Endothelial cell of umbilical vein (primary cell): ENCODE measurements at regions of chr5 and their contacts with region 1.

Region 1: DNA sequence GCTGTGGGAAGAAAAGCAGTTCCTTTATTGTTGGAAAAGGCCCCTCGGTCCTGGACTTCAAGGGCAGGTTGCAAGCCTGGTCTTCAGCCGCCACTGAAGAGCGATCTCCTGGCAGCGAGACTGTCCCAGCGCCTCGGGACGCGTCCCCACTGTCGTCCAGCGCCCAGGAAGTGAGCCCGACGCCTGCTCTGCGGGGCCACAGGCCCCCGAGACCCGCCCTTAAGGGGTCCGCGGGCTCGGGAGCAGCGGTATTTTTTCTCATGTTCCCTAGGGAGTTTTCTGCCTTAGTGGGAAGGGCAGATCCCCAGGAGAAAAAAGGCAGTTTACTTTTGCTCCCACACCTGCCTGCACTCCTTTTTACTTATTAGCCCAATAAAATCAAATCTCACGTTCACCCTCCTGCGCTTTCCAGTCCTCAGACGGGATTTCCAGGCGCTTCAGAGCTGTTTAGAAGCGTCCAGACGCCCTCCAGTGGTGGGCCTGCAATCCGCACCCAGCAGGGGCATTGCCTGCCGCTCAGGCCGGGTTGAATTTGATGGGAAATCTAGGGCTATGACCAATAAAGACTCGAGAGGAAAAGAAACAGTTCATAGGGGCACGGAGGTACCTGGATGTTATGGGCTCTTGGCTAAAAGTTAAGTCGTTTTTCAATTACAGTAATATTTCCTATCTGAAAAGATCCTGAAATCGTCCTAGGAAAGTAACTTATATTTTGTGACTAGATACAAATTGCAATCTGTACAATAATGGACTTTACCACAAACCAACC is 2.8 kb upstream of the EFNA5 start:
- DNase-seq: peak; percentile 87
- H3K4me3 ChIP-seq: peak overlapping the region; percentile 40 to 78 (median 45)
- H3K27ac ChIP-seq: peak overlapping the region; percentile 63
- H3K4me1 ChIP-seq: peaks cover 2% of the 10 kb centered on the region
- H3K27me3 ChIP-seq: no peaks in the 10 kb centered on the region
- CTCF ChIP-seq: peak; percentile 96 to 97
- POLR2A ChIP-seq: no peak

Region 2: DNA sequence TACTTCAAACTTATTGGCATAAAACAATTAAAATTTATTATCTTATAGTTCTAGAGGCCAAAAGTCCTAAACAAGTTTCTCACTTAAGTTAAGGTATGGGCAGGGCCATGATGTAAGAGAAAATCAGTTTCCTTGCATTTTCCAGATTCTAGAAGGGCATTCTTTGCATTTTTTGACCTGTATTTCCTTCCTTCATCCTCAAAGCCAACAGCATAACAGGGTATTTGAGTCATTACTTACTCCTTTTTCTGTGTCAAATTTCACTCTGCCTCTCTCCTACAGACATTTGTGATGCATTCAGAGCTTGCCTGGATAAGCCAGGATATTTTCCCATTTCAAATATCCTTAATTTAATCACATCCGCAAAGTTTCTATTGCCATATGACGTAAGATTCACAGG is 1501.8 kb before region 1 on chr5:
- CTCF ChIA-PET with region 1: no interaction called
- POLR2A ChIA-PET with region 1: no interaction called
- dilution Hi-C with region 1: no loop called
- intact Hi-C with region 1: loop called (anchors 2 kb)
- DNase-seq: peak; percentile 74
- H3K4me3 ChIP-seq: no peak overlapping the region
- H3K27ac ChIP-seq: peak overlapping the region; percentile 41
- H3K4me1 ChIP-seq: peaks cover 19% of the 10 kb centered on the region
- H3K27me3 ChIP-seq: no peaks in the 10 kb centered on the region
- CTCF ChIP-seq: no peak
- POLR2A ChIP-seq: no peak

Region 3: DNA sequence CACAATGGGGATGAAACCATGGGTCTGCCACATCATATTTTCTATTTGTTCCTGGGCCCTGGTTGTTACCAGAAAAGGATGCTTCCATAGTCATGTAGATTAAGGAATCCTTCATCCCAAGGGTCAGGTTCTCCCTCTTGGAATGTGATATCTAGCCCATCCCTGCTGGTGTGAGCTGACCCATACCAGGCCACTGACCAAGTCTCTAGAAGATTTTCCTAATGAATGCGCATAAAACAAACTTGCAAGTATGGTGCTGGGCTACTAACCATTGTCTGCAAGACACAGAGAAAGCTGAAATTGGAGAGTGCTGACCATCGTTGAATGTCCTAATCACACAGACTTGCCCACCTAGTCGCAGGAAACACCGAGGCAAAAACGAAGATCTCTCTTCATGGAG is 975.4 kb before region 1 on chr5:
- CTCF ChIA-PET with region 1: no interaction called
- POLR2A ChIA-PET with region 1: no interaction called
- dilution Hi-C with region 1: no loop called
- intact Hi-C with region 1: loop called (anchors 1 kb)
- DNase-seq: no peak
- H3K4me3 ChIP-seq: no peak overlapping the region
- H3K27ac ChIP-seq: no peak overlapping the region
- H3K4me1 ChIP-seq: no peaks in the 10 kb centered on the region
- H3K27me3 ChIP-seq: no peaks in the 10 kb centered on the region
- CTCF ChIP-seq: no peak
- POLR2A ChIP-seq: no peak

Region 4: DNA sequence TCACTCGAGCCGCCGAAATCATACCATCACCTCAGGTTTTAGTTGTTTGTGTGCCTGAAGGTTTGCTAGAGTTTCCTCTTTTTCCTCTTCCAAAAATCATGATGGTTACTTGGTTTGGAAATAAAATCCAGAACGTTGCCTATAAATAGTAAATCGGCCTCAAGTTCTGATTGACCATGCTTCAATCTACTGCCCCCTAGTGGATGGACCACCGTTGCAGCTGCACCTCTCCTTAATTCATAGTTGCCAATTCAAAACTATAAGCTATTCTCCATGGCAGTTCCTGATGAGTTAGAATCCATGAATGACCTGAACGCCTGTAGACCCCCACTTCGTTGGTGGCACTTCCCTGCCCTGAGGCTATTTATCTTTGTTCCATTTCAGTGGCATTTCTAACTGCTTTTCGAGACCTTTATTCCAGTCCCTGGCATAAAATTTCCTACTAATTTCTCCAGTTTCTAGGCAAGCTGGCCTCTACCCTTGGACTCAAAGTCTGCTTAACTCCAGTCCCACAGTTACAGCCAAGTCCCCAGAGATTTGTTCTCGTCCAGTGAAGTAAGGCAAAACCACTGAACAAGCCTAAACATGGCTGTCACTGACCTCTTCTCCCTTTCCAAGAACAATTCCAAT is 425.4 kb before region 1 on chr5:
- CTCF ChIA-PET with region 1: interaction called, 13 read pairs
- POLR2A ChIA-PET with region 1: no interaction called
- dilution Hi-C with region 1: no loop called
- intact Hi-C with region 1: loop called (anchors 1 kb)
- DNase-seq: peak; percentile 69
- H3K4me3 ChIP-seq: no peak overlapping the region
- H3K27ac ChIP-seq: no peak overlapping the region
- H3K4me1 ChIP-seq: no peaks in the 10 kb centered on the region
- H3K27me3 ChIP-seq: no peaks in the 10 kb centered on the region
- CTCF ChIP-seq: peak; percentile 77 to 79
- POLR2A ChIP-seq: no peak

Region 5: DNA sequence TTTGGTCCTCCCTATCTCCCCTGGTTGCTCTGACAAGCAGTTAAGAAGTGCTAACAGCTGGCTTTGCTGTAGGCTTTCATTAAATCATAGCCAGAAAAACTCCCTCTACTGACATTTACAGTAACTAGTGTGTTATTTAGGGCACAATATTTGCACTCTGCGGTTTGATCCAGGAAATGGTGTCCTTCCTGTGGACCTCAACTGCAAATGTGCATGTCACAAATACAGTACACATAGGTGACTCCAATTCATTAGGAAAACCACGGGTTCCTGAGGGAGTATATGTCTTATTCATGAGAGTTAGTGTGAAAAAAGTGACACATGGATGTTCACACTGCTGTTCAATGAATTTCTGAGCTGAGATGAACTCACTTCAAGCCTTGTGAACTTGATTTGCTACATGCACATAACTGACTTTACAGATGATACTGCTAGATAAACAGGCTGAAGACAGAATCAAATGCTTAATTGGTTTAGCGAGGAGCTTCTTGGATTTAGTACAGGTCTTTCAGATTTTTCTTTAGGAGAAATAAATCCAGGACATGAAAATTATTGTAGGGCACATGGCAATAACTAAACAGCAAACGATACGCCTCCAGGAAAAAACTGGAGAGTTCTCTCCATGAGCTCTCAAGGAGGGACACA is 284.3 kb before region 1 on chr5:
- CTCF ChIA-PET with region 1: interaction called, 4 read pairs
- POLR2A ChIA-PET with region 1: no interaction called
- dilution Hi-C with region 1: no loop called
- intact Hi-C with region 1: loop called (anchors 1 kb)
- DNase-seq: peak; percentile 92
- H3K4me3 ChIP-seq: no peak overlapping the region
- H3K27ac ChIP-seq: peak overlapping the region; percentile 57
- H3K4me1 ChIP-seq: peaks cover 32% of the 10 kb centered on the region
- H3K27me3 ChIP-seq: no peaks in the 10 kb centered on the region
- CTCF ChIP-seq: no peak
- POLR2A ChIP-seq: no peak

Region 6: DNA sequence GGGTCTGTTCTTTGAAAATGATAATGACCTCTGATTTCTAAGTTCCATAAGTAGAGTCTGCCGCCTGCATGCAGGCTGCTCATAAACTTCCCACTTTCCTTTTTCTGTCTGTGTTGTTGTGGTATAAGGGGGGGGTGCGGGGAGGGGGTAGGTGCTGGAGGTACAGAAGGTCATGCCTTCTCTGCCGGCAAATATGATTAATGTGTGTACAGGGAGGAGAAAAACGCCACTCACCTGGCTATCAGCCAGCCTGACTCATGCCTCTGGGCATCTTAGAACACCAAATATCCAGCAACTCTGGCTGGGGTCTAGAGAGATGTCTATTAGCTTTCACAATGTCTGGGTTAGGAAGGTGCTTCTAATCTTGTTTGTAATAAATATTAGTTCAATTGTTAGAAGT is 131.1 kb before region 1 on chr5:
- CTCF ChIA-PET with region 1: interaction called, 4 read pairs
- POLR2A ChIA-PET with region 1: no interaction called
- dilution Hi-C with region 1: no loop called
- intact Hi-C with region 1: loop called (anchors 1 kb)
- DNase-seq: peak; percentile 98
- H3K4me3 ChIP-seq: peak overlapping the region in 1 of 3 experiments; percentile 55
- H3K27ac ChIP-seq: peak overlapping the region; percentile 96
- H3K4me1 ChIP-seq: peaks cover 29% of the 10 kb centered on the region
- H3K27me3 ChIP-seq: no peaks in the 10 kb centered on the region
- CTCF ChIP-seq: no peak
- POLR2A ChIP-seq: no peak